MCF 10A (cell line): ENCODE measurements at regions of chr4 and their contacts with region 1.

Region 1: GRCh38 chr4:41120297-41121217 is 93.8 kb downstream of the APBB2 start:
- DNase-seq: peak; percentile 91
- H3K4me3 Mint-ChIP-seq: peak overlapping the region; percentile 77
- H3K27ac Mint-ChIP-seq: peak overlapping the region; percentile 92
- H3K4me1 Mint-ChIP-seq: peaks cover 60% of the 10 kb centered on the region
- H3K27me3 Mint-ChIP-seq: no peaks in the 10 kb centered on the region
- CTCF ChIP-seq: no peak

Region 2: GRCh38 chr4:40607221-40607620 is 513.3 kb before region 1 on chr4:
- CTCF ChIA-PET with region 1: no interaction called
- POLR2A ChIA-PET with region 1: no interaction called
- intact Hi-C with region 1: no loop called
- DNase-seq: peak; percentile 56
- H3K4me3 Mint-ChIP-seq: no peak overlapping the region
- H3K27ac Mint-ChIP-seq: no peak overlapping the region
- H3K4me1 Mint-ChIP-seq: peaks cover 7% of the 10 kb centered on the region
- H3K27me3 Mint-ChIP-seq: no peaks in the 10 kb centered on the region
- CTCF ChIP-seq: no peak

Region 3: GRCh38 chr4:40924096-40924792 is 196.3 kb before region 1 on chr4:
- CTCF ChIA-PET with region 1: no interaction called
- POLR2A ChIA-PET with region 1: no interaction called
- intact Hi-C with region 1: loop called (anchors 5 kb)
- DNase-seq: peak; percentile 69
- H3K4me3 Mint-ChIP-seq: no peak overlapping the region
- H3K27ac Mint-ChIP-seq: no peak overlapping the region
- H3K4me1 Mint-ChIP-seq: peaks cover 25% of the 10 kb centered on the region
- H3K27me3 Mint-ChIP-seq: no peaks in the 10 kb centered on the region
- CTCF ChIP-seq: peak; percentile 77

Region 4: GRCh38 chr4:40998675-40999358 is 121.7 kb before region 1 on chr4:
- CTCF ChIA-PET with region 1: no interaction called
- POLR2A ChIA-PET with region 1: interaction called, 23 read pairs
- intact Hi-C with region 1: no loop called
- DNase-seq: peak; percentile 92
- H3K4me3 Mint-ChIP-seq: peak overlapping the region; percentile 31
- H3K27ac Mint-ChIP-seq: peak overlapping the region; percentile 74
- H3K4me1 Mint-ChIP-seq: peaks cover 26% of the 10 kb centered on the region
- H3K27me3 Mint-ChIP-seq: no peaks in the 10 kb centered on the region
- CTCF ChIP-seq: no peak

Region 5: DNA sequence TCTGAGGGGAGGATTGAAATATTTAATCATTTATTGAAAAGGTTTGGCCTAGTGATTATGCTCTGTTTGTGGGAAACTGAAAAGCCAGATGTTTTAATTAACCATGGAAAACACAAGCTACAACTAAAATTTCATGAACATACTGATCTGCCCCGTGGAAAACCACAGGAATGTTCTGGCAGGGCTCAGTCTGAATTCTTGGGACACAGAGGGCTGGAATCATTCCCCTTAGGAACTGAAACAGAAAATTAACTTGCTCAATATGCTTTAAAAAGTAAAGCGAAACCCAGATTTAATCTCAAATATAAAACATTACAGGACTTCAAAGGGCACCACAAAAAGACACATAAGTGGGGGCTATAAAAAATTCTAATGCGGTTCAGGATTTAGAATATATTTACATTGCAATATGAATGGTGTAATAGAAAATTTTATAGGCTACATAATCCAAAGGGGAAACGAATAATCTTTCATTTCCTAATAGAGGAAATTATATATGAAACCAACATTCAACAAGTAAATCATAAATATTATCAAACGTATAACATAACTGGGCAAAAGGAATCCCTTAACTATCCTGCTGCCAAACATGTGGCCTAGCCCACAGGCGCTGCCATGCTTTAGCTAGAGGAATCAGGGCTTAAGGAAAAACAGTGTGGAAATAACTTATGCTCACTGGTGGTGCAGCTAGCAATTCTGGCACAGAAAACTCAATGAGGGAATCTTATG is 22.9 kb after region 1 on chr4:
- CTCF ChIA-PET with region 1: interaction called, 6 read pairs
- POLR2A ChIA-PET with region 1: interaction called, 462 read pairs
- intact Hi-C with region 1: no loop called
- DNase-seq: peak; percentile 90
- H3K4me3 Mint-ChIP-seq: peak overlapping the region; percentile 56
- H3K27ac Mint-ChIP-seq: peak overlapping the region; percentile 93
- H3K4me1 Mint-ChIP-seq: peaks cover 56% of the 10 kb centered on the region
- H3K27me3 Mint-ChIP-seq: no peaks in the 10 kb centered on the region
- CTCF ChIP-seq: no peak

Region 6: DNA sequence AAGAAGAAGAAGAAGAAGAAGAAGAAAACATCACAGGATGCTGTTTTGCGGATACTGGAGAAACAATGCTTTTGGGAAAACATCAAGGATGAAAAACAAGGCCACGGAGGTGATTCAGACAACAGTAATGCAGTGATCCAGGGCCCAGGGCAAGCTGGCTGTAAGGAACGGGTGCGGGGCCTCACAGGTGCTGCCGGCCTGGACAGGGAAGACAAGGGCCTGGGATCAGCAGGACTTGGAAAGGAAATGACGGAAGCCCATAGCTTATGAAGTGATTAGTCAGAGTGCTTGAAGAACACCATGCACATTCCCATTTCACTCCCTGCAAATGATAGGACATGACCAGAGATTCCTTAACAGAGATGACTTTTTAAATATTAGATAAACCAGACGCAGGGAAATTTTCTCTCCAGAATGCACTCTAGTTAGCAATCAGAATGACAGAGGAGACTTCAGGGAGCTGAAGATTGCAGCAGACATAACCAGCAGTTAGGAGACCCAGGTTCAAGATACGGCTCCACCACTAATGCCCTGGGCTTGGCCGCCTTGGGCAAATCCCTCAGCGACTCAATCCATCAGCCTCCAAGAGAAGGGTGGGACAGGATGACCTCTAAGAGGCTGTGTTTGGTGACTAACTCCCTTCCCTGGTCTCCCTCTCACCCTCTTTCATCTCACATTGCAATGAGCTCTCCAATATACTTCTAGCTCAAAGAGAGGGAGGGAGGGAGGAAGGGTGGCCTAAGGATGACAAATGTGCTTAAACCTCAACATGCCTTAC is 39.6 kb after region 1 on chr4:
- CTCF ChIA-PET with region 1: interaction called, 4 read pairs
- POLR2A ChIA-PET with region 1: interaction called, 134 read pairs
- intact Hi-C with region 1: loop called (anchors 2 kb)
- DNase-seq: peak; percentile 97
- H3K4me3 Mint-ChIP-seq: peak overlapping the region; percentile 61
- H3K27ac Mint-ChIP-seq: peak overlapping the region; percentile 94
- H3K4me1 Mint-ChIP-seq: peaks cover 62% of the 10 kb centered on the region
- H3K27me3 Mint-ChIP-seq: no peaks in the 10 kb centered on the region
- CTCF ChIP-seq: no peak

Region 7: DNA sequence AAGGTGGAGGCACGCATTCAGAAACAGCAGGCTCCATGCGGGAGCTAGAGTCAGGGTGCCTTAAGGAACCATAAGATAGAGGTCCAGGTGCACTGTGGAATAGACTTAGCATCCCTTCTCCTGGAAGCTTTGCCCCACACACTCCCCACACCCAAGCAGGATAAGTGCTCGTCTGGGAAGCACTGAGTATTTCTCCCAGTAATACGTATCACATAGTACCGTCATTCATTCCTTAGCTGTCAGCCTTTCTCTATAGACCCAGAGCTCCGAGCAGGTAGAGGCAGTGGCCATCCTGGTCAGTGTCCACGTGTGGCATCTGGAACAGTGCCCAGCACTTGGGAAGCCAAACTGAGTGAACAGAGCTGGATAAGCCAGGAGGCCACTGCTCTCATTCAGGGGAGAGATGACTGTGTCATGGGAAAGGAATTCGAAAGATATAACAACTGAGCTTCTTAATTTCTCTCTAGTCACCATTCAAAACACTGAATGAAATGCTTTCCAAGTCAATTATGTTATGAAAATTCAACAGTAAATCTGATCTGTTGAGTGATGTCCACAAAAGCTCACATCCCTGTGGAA is 83.9 kb after region 1 on chr4:
- CTCF ChIA-PET with region 1: interaction called, 4 read pairs
- POLR2A ChIA-PET with region 1: interaction called, 113 read pairs
- intact Hi-C with region 1: no loop called
- DNase-seq: peak; percentile 80
- H3K4me3 Mint-ChIP-seq: peak overlapping the region; percentile 6
- H3K27ac Mint-ChIP-seq: peak overlapping the region; percentile 83
- H3K4me1 Mint-ChIP-seq: peaks cover 85% of the 10 kb centered on the region
- H3K27me3 Mint-ChIP-seq: no peaks in the 10 kb centered on the region
- CTCF ChIP-seq: no peak